Dendritic cell treated with granulocyte-macrophage colony-stimulating factor and Interleukin-4, amounts not matched to agents 40 ng/mL and 50 ng/mL, for 4 days (primary cell): ENCODE measurements at regions of chr17 and their contacts with region 1.

Region 1: GRCh38 chr17:27805520-27806146 is 5.3 kb upstream of the NOS2 start:
- H3K4me3 Mint-ChIP-seq: peak overlapping the region; percentile 68
- H3K27ac Mint-ChIP-seq: peak overlapping the region; percentile 78
- H3K4me1 Mint-ChIP-seq: peaks cover 29% of the 10 kb centered on the region
- H3K27me3 Mint-ChIP-seq: no peaks in the 10 kb centered on the region

Region 2: GRCh38 chr17:27818401-27819105 is 12.9 kb after region 1 on chr17:
- intact Hi-C with region 1: no loop called
- H3K4me3 Mint-ChIP-seq: no peak overlapping the region
- H3K27ac Mint-ChIP-seq: no peak overlapping the region
- H3K4me1 Mint-ChIP-seq: no peaks in the 10 kb centered on the region
- H3K27me3 Mint-ChIP-seq: no peaks in the 10 kb centered on the region

Region 3: GRCh38 chr17:27879987-27880608 is 74.5 kb after region 1 on chr17:
- intact Hi-C with region 1: loop called (anchors 1 kb)
- H3K4me3 Mint-ChIP-seq: no peak overlapping the region
- H3K27ac Mint-ChIP-seq: no peak overlapping the region
- H3K4me1 Mint-ChIP-seq: no peaks in the 10 kb centered on the region
- H3K27me3 Mint-ChIP-seq: no peaks in the 10 kb centered on the region

Region 4: DNA sequence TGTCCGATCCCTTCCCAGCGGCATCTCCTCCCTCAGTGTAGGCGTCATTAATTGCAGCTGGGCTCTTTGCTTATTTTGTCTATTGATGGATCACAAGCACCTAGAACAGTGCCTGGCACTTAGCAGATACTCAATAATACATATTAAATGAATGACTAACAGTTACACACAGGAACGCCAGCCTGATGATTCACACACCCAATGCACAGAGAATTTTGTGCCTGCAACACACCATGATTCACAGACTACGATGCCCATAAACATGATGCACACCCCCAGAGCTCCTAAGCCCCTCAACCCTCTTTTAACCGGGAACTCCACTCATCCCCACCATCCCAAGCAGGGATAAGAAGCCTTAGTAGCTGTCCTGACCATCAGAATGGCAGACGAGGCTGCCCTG is 446.8 kb after region 1 on chr17:
- intact Hi-C with region 1: loop called (anchors 2 kb)
- H3K4me3 Mint-ChIP-seq: no peak overlapping the region
- H3K27ac Mint-ChIP-seq: no peak overlapping the region
- H3K4me1 Mint-ChIP-seq: peaks cover 10% of the 10 kb centered on the region
- H3K27me3 Mint-ChIP-seq: peaks cover 61% of the 10 kb centered on the region